ENCODE measurements at regions of chr5 and their contacts with region 1.

Region 1: DNA sequence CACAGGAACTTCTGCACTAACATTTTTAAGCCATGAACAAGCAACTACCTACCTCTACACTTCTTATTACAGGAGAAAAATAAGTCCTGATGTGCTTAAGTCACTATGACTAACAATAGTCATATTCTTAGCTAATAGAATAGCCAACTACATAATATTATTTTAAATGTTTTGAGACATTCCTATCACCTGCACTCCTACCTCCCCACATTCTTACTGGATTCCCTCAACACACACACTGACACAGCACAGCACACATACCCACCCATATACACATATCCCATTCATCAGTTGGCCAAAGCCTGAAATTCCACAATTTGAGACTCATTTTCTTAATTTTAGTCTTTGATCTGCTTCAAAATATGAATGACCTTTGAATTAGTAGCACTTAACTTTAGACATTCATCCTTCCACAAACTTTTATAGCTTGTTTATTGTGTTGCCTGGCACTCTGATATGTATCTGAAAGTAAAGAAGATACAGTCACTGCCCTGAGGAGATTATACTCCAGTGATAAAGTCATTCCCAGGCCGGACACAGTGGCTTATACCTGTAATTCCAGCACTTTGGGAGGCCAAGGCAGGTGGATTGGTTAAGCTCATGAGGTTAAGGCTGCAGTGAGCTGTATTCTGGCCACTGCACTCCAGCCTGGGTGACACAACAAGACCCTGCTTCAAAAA is 168.3 kb upstream of the RASA1 start:
- DNase-seq: peak; percentile 98
- ATAC-seq: peak; percentile 94
- H3K4me3 ChIP-seq: peak overlapping the region; percentile 21; the same call in 1 of the 2 replicates
- H3K27ac ChIP-seq: peak overlapping the region; percentile 88
- H3K4me1 ChIP-seq: peaks cover 26% of the 10 kb centered on the region
- H3K27me3 ChIP-seq: no peaks in the 10 kb centered on the region
- CTCF ChIP-seq: no peak

Region 2: GRCh38 chr5:87121304-87122150 is 22.1 kb after region 1 on chr5:
- CTCF ChIA-PET with region 1: interaction called, 3 read pairs
- POLR2A ChIA-PET with region 1: no interaction called
- intact Hi-C with region 1: loop called (anchors 1 kb)
- DNase-seq: peak; percentile 96
- ATAC-seq: peak; percentile 80
- H3K4me3 ChIP-seq: peak overlapping the region; percentile 38; the same call in 1 of the 2 replicates
- H3K27ac ChIP-seq: peak overlapping the region; percentile 71
- H3K4me1 ChIP-seq: peaks cover 57% of the 10 kb centered on the region
- H3K27me3 ChIP-seq: no peaks in the 10 kb centered on the region
- CTCF ChIP-seq: no peak

Region 3: GRCh38 chr5:87151547-87151946 is 52.2 kb after region 1 on chr5:
- CTCF ChIA-PET with region 1: no interaction called
- POLR2A ChIA-PET with region 1: interaction called, 10 read pairs
- intact Hi-C with region 1: no loop called
- DNase-seq: peak; percentile 97
- ATAC-seq: peak; percentile 95
- H3K4me3 ChIP-seq: no peak overlapping the region
- H3K27ac ChIP-seq: peak overlapping the region; percentile 27
- H3K4me1 ChIP-seq: peaks cover 29% of the 10 kb centered on the region
- H3K27me3 ChIP-seq: no peaks in the 10 kb centered on the region
- CTCF ChIP-seq: no peak

Region 4: GRCh38 chr5:87936667-87937066 is 837.3 kb after region 1 on chr5:
- CTCF ChIA-PET with region 1: no interaction called
- POLR2A ChIA-PET with region 1: no interaction called
- intact Hi-C with region 1: no loop called
- DNase-seq: no peak
- ATAC-seq: no peak
- H3K4me3 ChIP-seq: no peak overlapping the region
- H3K27ac ChIP-seq: no peak overlapping the region
- H3K4me1 ChIP-seq: no peaks in the 10 kb centered on the region
- H3K27me3 ChIP-seq: no peaks in the 10 kb centered on the region
- CTCF ChIP-seq: no peak

Measured in PC-3 (cell line).